ENCODE measurements at regions of chr3 and their contacts with region 1.

Region 1: DNA sequence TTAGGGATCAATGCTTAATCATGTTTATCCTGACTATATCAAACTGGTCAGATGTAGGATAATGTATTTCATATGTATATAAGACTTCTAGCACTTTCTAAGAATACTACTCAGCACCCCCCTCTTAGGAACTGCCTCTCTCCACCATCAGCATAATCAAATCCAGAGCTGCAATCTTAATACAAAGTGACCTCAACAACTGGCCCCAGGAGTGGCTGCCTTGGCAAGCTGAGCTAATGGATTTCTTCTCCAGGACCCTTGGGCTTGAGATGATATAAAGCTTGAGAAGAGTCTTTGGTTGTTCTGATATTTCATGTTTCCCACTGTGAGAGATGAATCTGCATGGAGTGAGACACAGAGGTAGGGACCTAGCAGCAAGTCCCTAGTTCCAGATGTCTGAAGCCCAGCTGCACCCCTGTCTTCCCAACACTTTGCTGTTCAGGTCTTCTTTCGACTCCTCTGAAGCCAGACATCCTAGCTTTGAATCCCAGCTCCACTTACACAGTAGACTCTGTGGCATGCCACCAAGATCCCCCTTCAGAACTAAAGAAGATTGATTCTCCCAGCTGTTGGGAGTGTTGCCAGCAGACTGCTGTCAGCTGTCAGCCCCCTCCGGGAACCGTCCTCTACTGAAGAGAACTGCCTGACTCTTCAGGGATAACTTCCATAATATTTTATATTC is 309.3 kb upstream of the UBE2E2 start:
- DNase-seq: no peak
- ATAC-seq: peak; percentile 50

Region 2: GRCh38 chr3:22495791-22496190 is 398.0 kb before region 1 on chr3:
- intact Hi-C with region 1: no loop called
- DNase-seq: no peak
- ATAC-seq: no peak

Region 3: DNA sequence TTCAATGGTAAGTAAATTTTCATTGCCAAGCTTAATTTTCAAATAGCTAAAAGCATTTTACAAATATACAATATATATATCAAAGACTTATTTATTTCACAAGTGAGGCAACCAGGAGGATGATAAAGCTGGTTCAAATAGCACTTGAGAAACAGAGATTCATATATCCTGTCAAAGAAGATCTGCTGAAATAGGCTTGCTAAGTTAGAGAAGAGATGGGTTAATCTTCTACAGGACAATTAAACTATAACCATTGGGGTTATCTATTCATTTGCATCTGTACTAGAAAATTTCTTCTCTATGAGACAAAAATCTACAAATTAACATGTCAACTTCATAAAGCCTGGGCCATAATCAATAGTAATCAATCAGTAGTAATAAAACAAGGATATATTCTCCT is 328.4 kb before region 1 on chr3:
- intact Hi-C with region 1: loop called (anchors 10 kb)
- DNase-seq: no peak
- ATAC-seq: no peak

Measured in Right ventricle myocardium inferior (tissue), 1 donor.